ENCODE measurements at regions of chr20 and their contacts with region 1.

Region 1: DNA sequence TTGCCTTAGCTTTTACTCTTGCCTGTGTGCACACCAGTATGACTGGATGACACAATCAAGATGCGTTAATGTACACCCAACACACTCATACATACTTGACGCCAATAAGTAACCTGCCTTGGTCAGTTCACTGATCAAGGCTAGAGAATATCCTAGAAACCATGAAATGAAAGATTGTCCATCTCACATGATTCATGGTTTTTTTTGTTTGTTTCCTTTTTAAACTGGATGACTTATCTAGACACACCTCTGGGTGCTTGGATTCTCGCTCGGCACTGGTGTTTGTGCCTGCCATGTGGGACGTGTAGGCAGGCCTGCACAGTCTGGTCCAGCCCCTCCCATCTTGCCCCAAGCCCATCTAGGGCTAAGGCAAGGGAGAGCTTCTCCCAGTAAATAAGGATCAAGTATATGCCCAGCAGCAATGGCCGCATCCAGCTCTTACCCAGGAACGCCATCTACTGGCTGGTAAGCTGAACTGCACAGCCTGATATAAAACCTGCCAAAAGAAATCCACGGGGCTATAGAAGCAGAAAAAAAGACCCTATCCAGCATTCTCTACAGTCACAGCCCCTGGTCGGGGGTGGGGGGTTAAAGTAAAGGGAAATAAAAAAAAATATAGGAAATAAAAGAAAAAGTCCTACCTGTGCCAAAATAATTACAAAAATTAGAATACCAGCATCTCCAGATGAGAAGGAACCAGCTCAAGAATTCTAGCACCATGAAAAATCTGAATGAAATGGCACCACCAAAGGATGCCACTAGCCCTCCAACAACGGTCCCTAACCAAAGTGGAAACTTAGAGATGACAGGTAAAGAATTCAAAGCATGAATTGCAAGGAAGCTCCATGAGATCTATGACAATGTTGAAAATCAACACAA is 73.3 kb downstream of the OTOR start:
- DNase-seq: peak; percentile 38
- H3K4me3 Mint-ChIP-seq: no peak overlapping the region
- H3K27ac Mint-ChIP-seq: no peak overlapping the region
- H3K4me1 Mint-ChIP-seq: no peaks in the 10 kb centered on the region
- H3K27me3 Mint-ChIP-seq: peaks cover 18% of the 10 kb centered on the region

Region 2: GRCh38 chr20:16517946-16518783 is 303.3 kb before region 1 on chr20:
- CTCF ChIA-PET with region 1: interaction called, 3 read pairs
- intact Hi-C with region 1: loop called (anchors 2 kb)
- DNase-seq: peak; percentile 55
- H3K4me3 Mint-ChIP-seq: no peak overlapping the region
- H3K27ac Mint-ChIP-seq: no peak overlapping the region
- H3K4me1 Mint-ChIP-seq: peaks cover 5% of the 10 kb centered on the region
- H3K27me3 Mint-ChIP-seq: no peaks in the 10 kb centered on the region

Region 3: DNA sequence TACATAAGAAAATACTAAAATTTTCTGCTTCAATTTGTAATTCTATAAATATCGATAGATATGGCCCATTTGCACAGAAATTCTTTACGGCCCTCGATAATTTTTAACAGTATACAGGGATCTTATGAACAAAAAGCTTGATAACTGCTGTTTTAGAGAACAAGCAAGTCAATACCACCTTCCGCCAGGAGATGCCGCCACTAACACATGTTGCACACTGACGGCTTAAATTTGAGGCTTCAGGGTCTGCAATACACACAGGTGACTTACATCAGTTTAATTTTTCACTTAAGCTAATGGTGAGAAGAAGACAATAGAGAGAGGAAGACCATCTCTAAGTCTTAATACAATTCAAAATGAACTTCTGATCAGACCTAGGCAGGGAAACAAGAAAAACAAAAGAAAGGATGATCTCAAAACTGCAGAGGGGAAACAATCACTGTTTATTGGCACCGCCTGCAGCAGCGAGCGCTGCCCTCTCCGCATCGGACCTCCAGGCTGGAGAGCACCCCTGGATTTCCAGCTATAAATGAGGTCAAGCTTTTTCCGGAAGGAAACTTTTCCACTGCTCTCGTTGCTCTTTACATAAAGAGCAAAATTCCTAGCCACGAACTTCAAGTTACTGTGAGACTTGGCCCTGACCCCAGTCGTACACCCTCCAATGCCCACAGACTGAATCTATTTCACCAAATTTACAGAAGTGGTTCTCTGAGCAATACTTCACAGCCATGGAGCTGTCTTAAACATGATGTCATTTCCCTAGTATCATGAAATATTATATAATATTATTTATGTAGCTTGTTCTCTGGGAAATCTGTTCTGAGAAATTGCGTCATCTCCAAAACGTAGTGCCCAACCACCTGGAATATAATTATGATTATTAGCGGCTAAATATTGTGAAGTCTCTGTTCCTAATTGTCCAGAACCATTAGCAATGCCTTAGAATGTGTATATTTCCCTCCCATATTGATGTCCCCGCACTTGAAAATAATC is 19.2 kb before region 1 on chr20:
- CTCF ChIA-PET with region 1: interaction called, 118 read pairs
- intact Hi-C with region 1: loop called (anchors 1 kb)
- DNase-seq: peak; percentile 78
- H3K4me3 Mint-ChIP-seq: no peak overlapping the region
- H3K27ac Mint-ChIP-seq: no peak overlapping the region
- H3K4me1 Mint-ChIP-seq: no peaks in the 10 kb centered on the region
- H3K27me3 Mint-ChIP-seq: peaks cover 46% of the 10 kb centered on the region

Region 4: GRCh38 chr20:16810216-16810615 is 11.2 kb before region 1 on chr20:
- CTCF ChIA-PET with region 1: interaction called, 118 read pairs
- intact Hi-C with region 1: no loop called
- DNase-seq: no peak
- H3K4me3 Mint-ChIP-seq: no peak overlapping the region
- H3K27ac Mint-ChIP-seq: no peak overlapping the region
- H3K4me1 Mint-ChIP-seq: no peaks in the 10 kb centered on the region
- H3K27me3 Mint-ChIP-seq: peaks cover 26% of the 10 kb centered on the region

Region 5: DNA sequence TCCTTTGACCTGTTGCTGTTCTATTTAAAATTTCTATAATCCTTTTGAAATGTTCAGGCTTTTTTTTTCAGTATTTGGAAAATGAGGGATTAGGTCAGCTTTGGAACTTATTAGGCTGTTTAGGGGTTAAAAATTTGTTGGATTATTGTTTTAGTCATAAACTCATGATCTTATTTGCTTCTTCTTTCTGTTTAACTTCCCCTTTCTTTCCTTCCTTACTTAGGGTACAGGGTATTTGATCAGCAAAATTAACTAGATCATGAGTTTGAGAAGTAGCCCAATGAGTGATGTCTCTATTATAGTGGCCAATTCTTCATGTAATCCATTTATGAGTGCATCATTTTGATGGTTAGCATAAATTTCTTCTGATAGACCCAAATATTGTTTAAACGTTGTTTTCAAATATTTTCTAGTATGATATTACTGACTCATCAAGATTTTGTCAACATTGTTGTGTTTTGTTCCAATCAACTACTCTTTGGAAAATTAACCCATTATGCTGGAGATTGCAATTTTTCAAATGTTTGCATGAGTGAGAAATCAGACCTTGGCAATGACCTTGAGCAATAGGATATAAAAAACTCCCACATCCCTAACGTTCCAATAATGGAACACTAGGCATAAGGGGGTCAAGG is 21.2 kb after region 1 on chr20:
- CTCF ChIA-PET with region 1: interaction called, 11 read pairs
- intact Hi-C with region 1: no loop called
- DNase-seq: no peak
- H3K4me3 Mint-ChIP-seq: no peak overlapping the region
- H3K27ac Mint-ChIP-seq: no peak overlapping the region
- H3K4me1 Mint-ChIP-seq: no peaks in the 10 kb centered on the region
- H3K27me3 Mint-ChIP-seq: peaks cover 5% of the 10 kb centered on the region

Measured in activated naive CD4-positive, alpha-beta T cell treated with anti-CD3 and anti-CD28 coated beads for 36 hours (primary cell).